Psoas muscle (tissue), 8 donors: ENCODE measurements at regions of chr17 and their contacts with region 1.

Region 1: GRCh38 chr17:82030470-82031302 is 792 bp upstream of the RAC3 start:
- DNase-seq: peak; percentile 87 to 94
- ATAC-seq: peak; percentile 84 to 96 (median 92)
- H3K4me3 ChIP-seq: peak overlapping the region; percentile 63
- H3K27ac ChIP-seq: no peak overlapping the region
- H3K4me1 ChIP-seq: peaks cover 12% of the 10 kb centered on the region
- H3K27me3 ChIP-seq: peaks cover 0 to 17% (median 0%) of the 10 kb centered on the region in 3 donors
- CTCF ChIP-seq: peak; percentile 98

Region 2: GRCh38 chr17:82105882-82106687 is 75.4 kb after region 1 on chr17:
- intact Hi-C with region 1: loop called in 1 of 2 experiments (anchors 5 kb)
- DNase-seq: peak; percentile 47 to 74
- ATAC-seq: peak; percentile 18 to 53 (median 40)
- H3K4me3 ChIP-seq: peak overlapping the region; percentile 43
- H3K27ac ChIP-seq: peak overlapping the region; percentile 97
- H3K4me1 ChIP-seq: peaks cover 45% of the 10 kb centered on the region
- H3K27me3 ChIP-seq: no peaks in the 10 kb centered on the region
- CTCF ChIP-seq: peak; percentile 15

Region 3: DNA sequence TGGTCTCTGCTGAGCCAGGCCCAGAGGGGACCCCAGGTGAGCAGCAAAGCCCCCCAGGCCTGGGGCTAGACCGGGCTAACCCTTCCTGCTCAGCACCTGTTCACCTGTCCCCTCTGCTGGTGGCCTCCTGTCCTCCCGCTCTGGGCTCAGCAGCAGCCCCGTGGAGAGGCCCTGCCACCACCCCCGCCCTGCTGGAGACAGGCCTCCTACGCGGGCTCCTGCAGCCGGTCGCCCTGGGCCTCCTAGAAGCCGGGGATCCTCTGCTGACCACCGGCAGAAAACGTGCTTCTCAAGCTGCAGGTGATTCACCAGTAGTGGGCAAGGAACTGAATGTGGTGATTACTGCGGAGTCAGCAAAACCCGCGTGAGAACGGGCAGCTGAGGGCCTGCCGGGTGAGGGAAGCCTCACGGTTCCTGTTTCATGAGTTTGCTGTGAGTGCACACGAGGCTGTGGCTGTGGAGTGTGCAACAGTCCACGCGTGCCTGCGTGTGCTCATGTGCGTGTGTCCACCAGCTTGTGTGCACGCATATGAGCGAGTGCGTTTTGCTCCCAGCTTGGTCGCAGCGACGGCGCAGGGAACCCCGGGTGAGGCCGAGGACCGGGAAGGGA is 302.1 kb after region 1 on chr17:
- intact Hi-C with region 1: loop called in 1 of 2 experiments (anchors 5 kb)
- DNase-seq: peak in 1 of 2 donors; percentile 49
- ATAC-seq: peak; percentile 15 to 44 (median 30)
- H3K4me3 ChIP-seq: peak overlapping the region; percentile 63
- H3K27ac ChIP-seq: no peak overlapping the region
- H3K4me1 ChIP-seq: peaks cover 17% of the 10 kb centered on the region
- H3K27me3 ChIP-seq: peaks cover 0 to 53% (median 18%) of the 10 kb centered on the region in 3 donors
- CTCF ChIP-seq: no peak